ENCODE measurements at regions of chr11 and their contacts with region 1.

Region 1: GRCh38 chr11:46346886-46347636 is at the start of gene DGKZ:
- DNase-seq: peak; percentile 93
- ATAC-seq: peak; percentile 66
- H3K4me3 Mint-ChIP-seq: peak within 1 kb of the TSS; percentile 90
- H3K27ac Mint-ChIP-seq: peak within 1 kb of the TSS; percentile 96
- H3K4me1 Mint-ChIP-seq: peaks cover 81% of the 10 kb centered on the region
- H3K27me3 Mint-ChIP-seq: no peaks in the 10 kb centered on the region
- total RNA-seq, gene DGKZ: 87.6 to 101 TPM

Region 2: DNA sequence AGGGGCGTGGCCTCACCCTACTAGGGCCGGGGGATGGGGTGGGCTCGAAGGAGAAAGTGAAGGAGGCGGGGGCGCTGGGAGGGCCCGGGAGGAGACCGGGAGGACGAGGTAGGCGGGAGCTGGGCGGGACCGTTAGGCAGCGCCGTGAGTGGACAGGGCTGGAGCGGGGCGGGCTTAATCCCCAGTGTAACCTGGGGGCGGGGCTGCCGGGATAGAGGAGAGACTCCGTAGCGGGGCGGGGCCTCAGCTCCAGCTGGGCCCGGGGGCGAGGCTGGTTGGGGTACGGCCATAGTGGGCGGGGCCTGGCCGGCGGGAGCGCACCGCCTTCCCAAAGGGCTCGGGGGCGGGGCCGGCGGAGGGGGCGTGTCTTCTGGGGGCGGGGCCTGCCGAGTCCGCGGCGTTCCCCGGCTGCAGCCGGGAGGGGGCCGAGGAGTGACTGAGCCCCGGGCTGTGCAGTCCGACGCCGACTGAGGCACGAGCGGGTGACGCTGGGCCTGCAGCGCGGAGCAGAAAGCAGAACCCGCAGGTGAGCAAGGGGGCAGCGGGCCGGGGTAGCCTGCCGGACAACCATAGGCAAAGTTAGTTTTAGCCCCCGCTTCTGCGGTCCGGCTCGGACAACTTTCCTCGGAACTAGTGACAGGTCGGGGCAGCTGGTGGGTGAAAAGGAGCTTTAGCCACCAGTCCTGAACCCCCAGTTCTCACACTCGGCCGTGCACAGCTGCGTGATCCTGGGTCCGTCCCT is 1781.7 kb before region 1 on chr11 and contains the start of gene CD82:
- CTCF ChIA-PET with region 1: no interaction called
- POLR2A ChIA-PET with region 1: no interaction called
- intact Hi-C with region 1: loop called in 1 of 2 experiments (anchors 5 kb)
- DNase-seq: peak; percentile 100
- ATAC-seq: peak; percentile 84
- H3K4me3 Mint-ChIP-seq: peak within 1 kb of the TSS; percentile 93
- H3K27ac Mint-ChIP-seq: peak within 1 kb of the TSS; percentile 92
- H3K4me1 Mint-ChIP-seq: peaks cover 54% of the 10 kb centered on the region
- H3K27me3 Mint-ChIP-seq: no peaks in the 10 kb centered on the region
- total RNA-seq, gene CD82: 239 to 272 TPM

Region 3: GRCh38 chr11:45917623-45918330 is 429.3 kb before region 1 on chr11 and contains the start of gene PEX16:
- CTCF ChIA-PET with region 1: no interaction called
- POLR2A ChIA-PET with region 1: no interaction called
- intact Hi-C with region 1: loop called in 1 of 2 experiments (anchors 1 kb)
- DNase-seq: peak; percentile 97
- ATAC-seq: peak; percentile 94
- H3K4me3 Mint-ChIP-seq: peak within 1 kb of the TSS; percentile 96
- H3K27ac Mint-ChIP-seq: peak within 1 kb of the TSS; percentile 95
- H3K4me1 Mint-ChIP-seq: peaks cover 31% of the 10 kb centered on the region
- H3K27me3 Mint-ChIP-seq: peaks cover 3% of the 10 kb centered on the region
- total RNA-seq, gene PEX16: 28.1 to 33.4 TPM

Region 4: GRCh38 chr11:46295312-46296058 is 51.6 kb before region 1 on chr11:
- CTCF ChIA-PET with region 1: interaction called, 4 read pairs
- POLR2A ChIA-PET with region 1: interaction called, 4 read pairs
- intact Hi-C with region 1: loop called in 1 of 2 experiments (anchors 1 kb)
- DNase-seq: peak; percentile 82
- ATAC-seq: peak; percentile 93
- H3K4me3 Mint-ChIP-seq: peak overlapping the region; percentile 72
- H3K27ac Mint-ChIP-seq: no peak overlapping the region
- H3K4me1 Mint-ChIP-seq: peaks cover 12% of the 10 kb centered on the region
- H3K27me3 Mint-ChIP-seq: peaks cover 10% of the 10 kb centered on the region

Region 5: DNA sequence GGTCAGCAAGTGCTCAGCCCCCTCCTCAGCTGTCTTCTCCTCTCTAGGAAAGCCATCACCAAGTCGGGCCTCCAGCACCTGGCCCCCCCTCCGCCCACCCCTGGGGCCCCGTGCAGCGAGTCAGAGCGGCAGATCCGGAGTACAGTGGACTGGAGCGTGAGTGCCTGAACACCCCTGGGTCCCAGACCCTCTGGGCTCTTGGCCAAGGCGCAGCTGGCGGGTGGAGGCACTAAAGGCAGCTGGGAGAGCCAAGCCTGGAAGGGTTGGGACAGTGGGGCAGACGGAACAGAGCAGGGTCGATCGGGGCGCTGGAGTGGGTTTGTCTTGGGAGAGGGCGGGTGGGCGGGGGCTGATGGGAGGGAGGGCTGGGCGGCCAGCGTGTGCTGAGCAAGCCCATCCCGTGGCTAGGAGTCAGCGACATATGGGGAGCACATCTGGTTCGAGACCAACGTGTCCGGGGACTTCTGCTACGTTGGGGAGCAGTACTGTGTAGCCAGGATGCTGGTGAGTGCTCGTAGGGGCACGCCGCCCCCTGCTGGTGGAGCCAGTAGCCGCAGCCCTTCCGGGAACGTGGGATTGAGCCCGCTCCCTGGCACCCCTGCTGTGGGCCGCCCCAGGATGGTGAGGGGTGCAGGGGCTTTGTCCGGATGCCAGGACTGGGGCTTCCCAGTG is 20.3 kb after region 1 on chr11:
- CTCF ChIA-PET with region 1: interaction called, 141 read pairs
- POLR2A ChIA-PET with region 1: interaction called, 3 read pairs
- intact Hi-C with region 1: loop called (anchors 1 to 2 kb)
- DNase-seq: peak; percentile 87
- ATAC-seq: peak; percentile 86
- H3K4me3 Mint-ChIP-seq: no peak overlapping the region
- H3K27ac Mint-ChIP-seq: peak overlapping the region; percentile 83
- H3K4me1 Mint-ChIP-seq: peaks cover 30% of the 10 kb centered on the region
- H3K27me3 Mint-ChIP-seq: no peaks in the 10 kb centered on the region

Region 6: GRCh38 chr11:46421257-46421880 is 74.3 kb after region 1 on chr11:
- CTCF ChIA-PET with region 1: no interaction called
- POLR2A ChIA-PET with region 1: no interaction called
- intact Hi-C with region 1: no loop called
- DNase-seq: no peak
- ATAC-seq: no peak
- H3K4me3 Mint-ChIP-seq: no peak overlapping the region
- H3K27ac Mint-ChIP-seq: no peak overlapping the region
- H3K4me1 Mint-ChIP-seq: no peaks in the 10 kb centered on the region
- H3K27me3 Mint-ChIP-seq: no peaks in the 10 kb centered on the region

Region 7: GRCh38 chr11:46504817-46505613 is 158.0 kb after region 1 on chr11:
- CTCF ChIA-PET with region 1: no interaction called
- POLR2A ChIA-PET with region 1: no interaction called
- intact Hi-C with region 1: no loop called
- DNase-seq: no peak
- ATAC-seq: peak; percentile 87
- H3K4me3 Mint-ChIP-seq: no peak overlapping the region
- H3K27ac Mint-ChIP-seq: peak overlapping the region; percentile 72
- H3K4me1 Mint-ChIP-seq: peaks cover 23% of the 10 kb centered on the region
- H3K27me3 Mint-ChIP-seq: no peaks in the 10 kb centered on the region

Region 8: DNA sequence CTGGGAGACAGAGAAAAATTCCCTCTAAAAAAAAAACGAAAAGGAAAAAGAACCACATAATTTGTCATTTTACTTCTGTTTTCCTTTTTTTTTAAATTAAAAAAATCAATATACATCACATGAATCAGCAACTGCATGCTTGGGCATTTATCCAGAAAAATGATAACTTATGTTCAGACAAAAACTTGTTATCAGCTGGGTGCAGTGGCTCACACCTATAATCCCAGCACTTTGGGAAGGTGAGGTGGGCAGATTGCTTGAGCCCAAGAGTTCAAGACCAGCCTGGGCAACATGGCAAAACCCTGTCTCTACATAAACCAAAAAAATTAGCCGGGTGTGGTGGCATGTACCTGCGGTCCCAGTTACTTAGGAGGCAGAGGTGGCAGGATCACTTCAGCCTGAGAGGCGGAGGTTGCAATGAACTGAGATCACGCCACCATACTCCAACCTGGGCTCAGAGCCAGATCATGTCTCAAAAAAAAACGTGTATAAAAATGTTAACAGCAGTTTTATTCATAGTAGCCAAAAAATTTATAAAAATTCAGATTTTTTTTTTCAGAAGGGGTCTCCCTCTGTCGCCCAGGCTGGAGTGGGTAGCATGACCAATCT is 218.3 kb after region 1 on chr11:
- CTCF ChIA-PET with region 1: no interaction called
- POLR2A ChIA-PET with region 1: no interaction called
- intact Hi-C with region 1: no loop called
- DNase-seq: no peak
- ATAC-seq: no peak
- H3K4me3 Mint-ChIP-seq: no peak overlapping the region
- H3K27ac Mint-ChIP-seq: no peak overlapping the region
- H3K4me1 Mint-ChIP-seq: peaks cover 34% of the 10 kb centered on the region
- H3K27me3 Mint-ChIP-seq: no peaks in the 10 kb centered on the region

Region 9: DNA sequence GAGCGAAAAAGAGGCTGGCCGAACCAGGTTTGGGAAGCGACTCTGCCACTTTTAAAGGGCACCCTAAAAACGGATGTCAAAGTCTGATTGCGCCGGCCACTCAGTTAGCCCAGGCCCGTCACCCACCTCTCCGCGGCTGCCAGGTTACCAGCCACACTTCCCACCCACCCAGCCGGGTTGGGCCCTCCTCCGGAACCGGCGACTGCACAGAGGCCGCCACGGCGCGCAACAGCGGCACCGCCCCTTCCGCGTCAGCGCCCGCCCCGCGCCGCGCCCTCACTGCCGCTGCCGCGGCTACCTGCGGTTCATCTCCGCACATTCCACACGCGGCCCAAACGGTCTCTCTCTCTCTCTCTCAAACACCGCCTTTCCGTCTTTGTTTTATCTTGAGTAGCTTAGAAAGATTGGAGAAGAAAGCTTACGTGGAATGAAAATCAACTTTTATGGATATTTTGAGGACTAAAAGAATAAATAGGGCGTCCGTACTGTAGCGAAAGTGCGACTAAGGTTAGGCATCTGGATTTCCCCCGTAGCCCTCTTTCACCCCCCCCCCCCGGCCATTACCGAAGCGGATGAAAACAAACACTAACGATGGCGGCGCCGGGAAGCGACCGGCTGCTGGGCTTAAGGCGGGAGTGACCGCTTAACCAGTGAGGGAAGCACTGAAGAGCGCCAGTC is 270.1 kb after region 1 on chr11 and contains the starts of genes ATG13 and HARBI1:
- CTCF ChIA-PET with region 1: interaction called, 3 read pairs
- POLR2A ChIA-PET with region 1: no interaction called
- intact Hi-C with region 1: loop called in 1 of 2 experiments (anchors 1 kb)
- DNase-seq: peak; percentile 95
- ATAC-seq: peak; percentile 96
- H3K4me3 Mint-ChIP-seq: peak within 1 kb of the TSS; percentile 89
- H3K27ac Mint-ChIP-seq: peak within 1 kb of the TSS; percentile 100
- H3K4me1 Mint-ChIP-seq: peaks cover 31% of the 10 kb centered on the region
- H3K27me3 Mint-ChIP-seq: no peaks in the 10 kb centered on the region
- total RNA-seq, gene ATG13: 39.4 to 56.4 TPM
- total RNA-seq, gene HARBI1: 2.3 to 2.7 TPM

Region 10: GRCh38 chr11:47269002-47269828 is 922.2 kb after region 1 on chr11:
- CTCF ChIA-PET with region 1: no interaction called
- POLR2A ChIA-PET with region 1: no interaction called
- intact Hi-C with region 1: loop called in 1 of 2 experiments (anchors 5 kb)
- DNase-seq: peak; percentile 93
- ATAC-seq: peak; percentile 61
- H3K4me3 Mint-ChIP-seq: peak overlapping the region; percentile 76
- H3K27ac Mint-ChIP-seq: peak overlapping the region; percentile 98
- H3K4me1 Mint-ChIP-seq: peaks cover 60% of the 10 kb centered on the region
- H3K27me3 Mint-ChIP-seq: no peaks in the 10 kb centered on the region

Measured in activated CD4-positive, alpha-beta T cell treated with anti-CD3 and anti-CD28 coated beads for 36 hours (primary cell).